ENCODE measurements at regions of chr3 and their contacts with region 1.

Region 1: DNA sequence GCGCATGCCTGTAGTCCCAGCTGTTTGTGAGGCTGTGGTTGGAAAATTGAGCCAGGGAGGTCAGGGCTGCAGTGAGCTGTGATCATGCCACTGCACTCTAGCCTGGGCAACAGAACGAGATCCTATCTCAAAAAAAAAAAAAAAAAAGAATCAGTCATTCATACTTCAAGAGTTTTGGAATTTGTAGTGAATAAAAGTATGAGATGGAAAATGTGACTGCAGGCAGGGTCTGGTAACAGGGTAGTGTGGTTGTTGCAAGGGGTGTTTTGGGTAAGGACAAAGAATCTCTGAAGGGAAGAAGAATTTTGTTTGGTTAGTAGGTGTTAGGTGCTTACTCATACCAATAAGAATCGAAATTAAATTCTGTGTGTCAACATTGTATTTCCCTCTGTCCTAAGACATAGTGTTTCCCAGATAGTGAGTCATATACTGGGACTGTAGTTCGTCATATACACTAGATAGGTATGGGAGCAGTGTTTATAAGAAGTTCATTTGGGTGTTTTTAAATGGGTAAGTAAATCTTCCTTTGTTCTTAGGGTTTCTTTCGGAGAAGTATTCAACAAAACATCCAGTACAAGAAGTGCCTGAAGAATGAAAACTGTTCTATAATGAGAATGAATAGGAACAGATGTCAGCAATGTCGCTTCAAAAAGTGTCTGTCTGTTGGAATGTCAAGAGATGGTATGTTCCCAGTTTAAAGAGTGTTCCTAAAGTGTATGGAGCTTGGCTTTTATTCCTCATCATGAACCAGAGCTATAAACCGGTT is 14.2 kb downstream of the NR1D2 start:
- DNase-seq: peak; percentile 43
- H3K4me3 Mint-ChIP-seq: no peak overlapping the region
- H3K27ac Mint-ChIP-seq: peak overlapping the region; percentile 57
- H3K4me1 Mint-ChIP-seq: peaks cover 33% of the 10 kb centered on the region
- H3K27me3 Mint-ChIP-seq: no peaks in the 10 kb centered on the region

Region 2: DNA sequence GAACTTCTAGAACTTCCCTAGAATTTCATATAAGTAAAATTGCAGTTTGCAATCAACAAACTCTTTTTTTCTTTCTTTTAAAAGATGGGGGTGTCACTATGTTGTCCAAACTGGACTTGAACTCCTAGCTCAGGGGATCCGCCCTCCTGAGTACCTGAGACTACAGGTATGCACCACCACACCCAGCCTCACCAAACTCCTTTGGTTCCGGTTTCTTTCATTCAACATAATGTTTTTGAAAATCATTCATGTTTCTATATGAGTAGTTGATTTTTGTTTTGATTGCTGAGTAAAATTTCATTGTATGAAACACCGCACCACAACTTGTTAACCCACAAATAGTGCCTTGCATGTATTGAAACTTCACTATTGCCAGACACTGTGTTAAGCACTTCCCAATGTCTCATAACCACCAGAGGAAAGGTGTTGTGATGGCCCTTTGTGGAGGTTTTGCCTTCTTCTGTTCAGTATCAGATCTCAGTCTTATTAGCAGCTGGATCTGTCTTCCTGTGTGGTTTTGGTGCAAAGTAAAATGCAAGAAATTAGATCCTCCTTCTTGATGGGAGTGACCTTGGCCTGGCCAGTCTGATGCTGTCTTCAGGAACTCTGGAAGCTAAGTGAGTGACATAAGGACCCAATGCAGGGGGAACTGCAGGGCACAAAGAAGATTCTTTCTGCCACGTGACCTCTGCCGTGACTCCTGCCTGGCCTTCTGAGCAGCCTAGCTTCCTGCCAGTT is 232.3 kb before region 1 on chr3:
- CTCF ChIA-PET with region 1: no interaction called
- POLR2A ChIA-PET with region 1: no interaction called
- intact Hi-C with region 1: no loop called
- DNase-seq: peak; percentile 24
- H3K4me3 Mint-ChIP-seq: no peak overlapping the region
- H3K27ac Mint-ChIP-seq: no peak overlapping the region
- H3K4me1 Mint-ChIP-seq: peaks cover 8% of the 10 kb centered on the region
- H3K27me3 Mint-ChIP-seq: no peaks in the 10 kb centered on the region

Region 3: GRCh38 chr3:24154013-24154695 is 194.8 kb after region 1 on chr3:
- CTCF ChIA-PET with region 1: no interaction called
- POLR2A ChIA-PET with region 1: no interaction called
- intact Hi-C with region 1: loop called (anchors 1 kb)
- DNase-seq: no peak
- H3K4me3 Mint-ChIP-seq: no peak overlapping the region
- H3K27ac Mint-ChIP-seq: peak overlapping the region; percentile 64
- H3K4me1 Mint-ChIP-seq: peaks cover 27% of the 10 kb centered on the region
- H3K27me3 Mint-ChIP-seq: peaks cover 3% of the 10 kb centered on the region